HCT116 (cell line): ENCODE measurements at regions of chr6 and their contacts with region 1.

Region 1: GRCh38 chr6:41027799-41028628 is 11.0 kb downstream of the UNC5CL start:
- DNase-seq: peak; percentile 35
- ATAC-seq: peak; percentile 95
- H3K4me3 ChIP-seq: peak overlapping the region; percentile 48 to 58
- H3K27ac ChIP-seq: no peak overlapping the region; the same call in 1 of the 2 replicates
- H3K4me1 ChIP-seq: peaks cover 5 to 17% of the 10 kb centered on the region in 2 experiments
- H3K27me3 ChIP-seq: no peaks in the 10 kb centered on the region
- CTCF ChIP-seq: peak; percentile 95 to 97 (median 96)
- POLR2A ChIP-seq: peak; percentile 34
- RAD21 ChIP-seq: peak; percentile 98

Region 2: GRCh38 chr6:39980839-39981580 is 1047.0 kb before region 1 on chr6:
- CTCF ChIA-PET with region 1: no interaction called
- POLR2A ChIA-PET with region 1: no interaction called
- RAD21 ChIA-PET with region 1: no interaction called
- intact Hi-C with region 1: loop called (anchors 10 kb)
- DNase-seq: peak; percentile 37
- ATAC-seq: peak; percentile 84
- H3K4me3 ChIP-seq: no peak overlapping the region
- H3K27ac ChIP-seq: no peak overlapping the region
- H3K4me1 ChIP-seq: no peaks in the 10 kb centered on the region
- H3K27me3 ChIP-seq: no peaks in the 10 kb centered on the region; the same call in 1 of the 2 replicates
- CTCF ChIP-seq: peak; percentile 40 to 55 (median 54); a peak in 5 of 6 replicates
- POLR2A ChIP-seq: no peak
- RAD21 ChIP-seq: peak; percentile 66

Region 3: GRCh38 chr6:40550202-40551101 is 477.6 kb before region 1 on chr6:
- CTCF ChIA-PET with region 1: no interaction called
- POLR2A ChIA-PET with region 1: no interaction called
- RAD21 ChIA-PET with region 1: no interaction called
- intact Hi-C with region 1: loop called (anchors 5 kb)
- DNase-seq: peak; percentile 44
- ATAC-seq: peak; percentile 90
- H3K4me3 ChIP-seq: no peak overlapping the region
- H3K27ac ChIP-seq: no peak overlapping the region
- H3K4me1 ChIP-seq: no peaks in the 10 kb centered on the region
- H3K27me3 ChIP-seq: peaks cover 5% of the 10 kb centered on the region; the same call in 1 of the 2 replicates
- CTCF ChIP-seq: peak; percentile 43 to 78 (median 71)
- POLR2A ChIP-seq: no peak
- RAD21 ChIP-seq: peak; percentile 50

Region 4: GRCh38 chr6:40894962-40895799 is 132.8 kb before region 1 on chr6:
- CTCF ChIA-PET with region 1: interaction called, 25 read pairs
- POLR2A ChIA-PET with region 1: interaction called, 3 read pairs
- RAD21 ChIA-PET with region 1: interaction called in 1 of 2 experiments, 7 read pairs
- intact Hi-C with region 1: loop called (anchors 1 kb)
- DNase-seq: peak; percentile 40
- ATAC-seq: peak; percentile 99
- H3K4me3 ChIP-seq: no peak overlapping the region
- H3K27ac ChIP-seq: no peak overlapping the region
- H3K4me1 ChIP-seq: peaks cover 0 to 3% of the 10 kb centered on the region in 2 experiments; a peak in 2 of 4 replicates
- H3K27me3 ChIP-seq: no peaks in the 10 kb centered on the region
- CTCF ChIP-seq: peak; percentile 70 to 78 (median 77)
- POLR2A ChIP-seq: no peak
- RAD21 ChIP-seq: peak; percentile 91

Region 5: DNA sequence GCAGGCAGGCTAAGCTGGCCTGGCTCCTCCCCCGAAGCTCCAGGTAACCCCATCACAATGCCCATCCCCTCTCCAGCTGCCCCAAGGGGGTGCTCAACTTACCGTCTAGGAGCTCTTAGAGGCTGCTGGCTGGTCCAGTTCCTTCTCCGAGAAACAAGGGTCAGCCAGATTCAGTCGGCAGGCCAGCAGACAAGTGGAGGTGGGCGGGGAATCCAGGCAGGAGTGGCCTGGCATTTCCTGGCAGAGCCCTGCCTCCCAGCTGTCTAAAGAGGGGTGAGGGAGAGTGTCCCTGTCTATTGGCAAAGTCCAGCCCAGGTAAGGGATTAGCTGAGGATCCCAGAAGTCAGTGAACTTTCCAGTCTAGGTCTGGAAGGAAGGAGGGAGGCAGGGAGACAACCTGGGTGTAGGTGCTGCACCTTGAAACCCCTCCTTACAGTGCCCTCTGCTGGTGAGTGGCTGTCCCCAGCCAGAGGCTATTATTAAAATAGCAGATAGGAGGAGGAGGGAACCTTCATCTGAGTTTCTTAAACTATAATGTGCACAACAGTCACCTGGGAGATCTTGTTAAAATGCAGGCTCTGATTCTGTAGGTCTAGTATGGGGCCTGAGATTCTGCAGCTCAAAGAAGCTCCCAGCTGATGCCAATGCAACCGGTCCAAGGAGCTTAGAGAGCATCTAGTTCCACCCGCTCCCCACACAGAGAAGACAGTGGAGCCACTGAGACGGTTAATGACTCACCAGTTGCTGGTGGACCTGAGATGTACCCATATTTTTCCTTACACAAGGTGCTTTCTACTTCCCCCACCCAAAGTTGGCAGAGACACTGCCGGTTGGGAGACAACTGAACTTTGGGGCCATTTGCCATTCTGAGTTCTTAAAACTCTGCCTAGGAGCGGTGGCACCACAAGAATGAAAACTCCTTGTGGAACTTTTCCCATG is 11.3 kb after region 1 on chr6 and contains the start of gene UNC5CL:
- CTCF ChIA-PET with region 1: interaction called, 22 read pairs
- POLR2A ChIA-PET with region 1: interaction called, 5 read pairs
- RAD21 ChIA-PET with region 1: no interaction called
- intact Hi-C with region 1: no loop called
- DNase-seq: peak; percentile 27
- ATAC-seq: peak; percentile 91
- H3K4me3 ChIP-seq: 0 out of 4 replicates have a peak within 1 kb of the TSS, but pooled peaks of 1 of the 2 experiments have one; percentile 2
- H3K27ac ChIP-seq: peak within 1 kb of the TSS; percentile 39; the same call in 1 of the 2 replicates
- H3K4me1 ChIP-seq: peaks cover 23 to 43% of the 10 kb centered on the region in 2 experiments; a peak in 3 of 4 replicates
- H3K27me3 ChIP-seq: no peaks in the 10 kb centered on the region
- CTCF ChIP-seq: peak; percentile 76 to 96 (median 93)
- POLR2A ChIP-seq: no peak
- RAD21 ChIP-seq: peak; percentile 71
- total RNA-seq, gene UNC5CL: 2.2 TPM

Region 6: GRCh38 chr6:41053041-41053440 is 25.0 kb after region 1 on chr6 and contains the start of gene APOBEC2:
- CTCF ChIA-PET with region 1: no interaction called
- POLR2A ChIA-PET with region 1: no interaction called
- RAD21 ChIA-PET with region 1: no interaction called
- intact Hi-C with region 1: no loop called
- DNase-seq: no peak
- ATAC-seq: no peak
- H3K4me3 ChIP-seq: no peak within 1 kb of the TSS
- H3K27ac ChIP-seq: no peak within 1 kb of the TSS
- H3K4me1 ChIP-seq: no peaks in the 10 kb centered on the region
- H3K27me3 ChIP-seq: no peaks in the 10 kb centered on the region
- CTCF ChIP-seq: no peak
- POLR2A ChIP-seq: no peak
- RAD21 ChIP-seq: no peak
- total RNA-seq, gene APOBEC2: not detected

Region 7: DNA sequence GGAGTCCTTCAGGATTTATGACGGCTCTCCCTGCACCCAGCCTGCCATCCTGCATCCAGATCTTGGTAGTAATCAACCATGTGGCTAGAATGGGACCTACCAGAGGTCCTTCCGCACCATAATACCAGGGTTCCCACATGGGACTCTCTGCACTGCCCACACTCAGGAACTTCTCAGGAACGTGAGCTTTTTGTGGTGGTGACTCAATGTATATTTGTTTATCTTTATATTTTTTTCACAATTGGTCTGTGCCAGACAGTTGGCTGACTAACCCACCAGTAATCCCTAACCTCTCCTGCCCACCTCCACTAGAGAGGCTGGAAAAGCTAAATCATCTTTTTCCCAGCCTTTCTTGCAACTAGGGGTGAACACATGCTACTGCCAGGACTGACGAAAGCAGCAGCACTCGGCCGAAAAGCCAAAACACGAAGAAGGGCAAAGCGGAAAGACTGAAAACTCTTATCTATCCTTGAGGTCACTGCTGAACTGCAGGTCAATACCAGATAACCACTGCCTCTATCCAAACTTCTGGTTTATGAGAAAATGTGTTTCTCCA is 1310.7 kb after region 1 on chr6:
- CTCF ChIA-PET with region 1: no interaction called
- POLR2A ChIA-PET with region 1: no interaction called
- RAD21 ChIA-PET with region 1: no interaction called
- intact Hi-C with region 1: no loop called
- DNase-seq: peak; percentile 83
- ATAC-seq: peak; percentile 87
- H3K4me3 ChIP-seq: peak overlapping the region in 1 of 2 experiments; percentile 10; a peak in 1 of 4 replicates
- H3K27ac ChIP-seq: peak overlapping the region; percentile 53
- H3K4me1 ChIP-seq: peaks cover 30 to 34% of the 10 kb centered on the region in 2 experiments
- H3K27me3 ChIP-seq: no peaks in the 10 kb centered on the region
- CTCF ChIP-seq: no peak; a peak in 1 of 6 replicates
- POLR2A ChIP-seq: no peak
- RAD21 ChIP-seq: no peak; the same call in 1 of the 2 replicates